ENCODE measurements at regions of chr3 and their contacts with region 1.

Region 1: GRCh38 chr3:52851348-52851747 is 16.5 kb upstream of the MUSTN1 start:
- DNase-seq: peak; percentile 50
- ATAC-seq: peak; percentile 88
- H3K4me3 Mint-ChIP-seq: no peak overlapping the region
- H3K27ac Mint-ChIP-seq: no peak overlapping the region
- H3K4me1 Mint-ChIP-seq: no peaks in the 10 kb centered on the region
- H3K27me3 Mint-ChIP-seq: no peaks in the 10 kb centered on the region

Region 2: GRCh38 chr3:52934630-52935530 is 83.5 kb after region 1 on chr3:
- CTCF ChIA-PET with region 1: interaction called, 11 read pairs
- POLR2A ChIA-PET with region 1: no interaction called
- intact Hi-C with region 1: loop called (anchors 1 kb)
- DNase-seq: peak; percentile 75
- ATAC-seq: peak; percentile 99
- H3K4me3 Mint-ChIP-seq: no peak overlapping the region
- H3K27ac Mint-ChIP-seq: no peak overlapping the region
- H3K4me1 Mint-ChIP-seq: peaks cover 12% of the 10 kb centered on the region
- H3K27me3 Mint-ChIP-seq: no peaks in the 10 kb centered on the region

Measured in activated CD4-positive, alpha-beta T cell treated with anti-CD3 and anti-CD28 coated beads for 36 hours (primary cell).